SK-N-SH (cell line): ENCODE measurements at regions of chr15 and their contacts with region 1.

Region 1: GRCh38 chr15:45166834-45167630 is 20.7 kb downstream of the SHF start:
- DNase-seq: peak; percentile 83
- H3K4me3 ChIP-seq: peak overlapping the region; percentile 54 to 72
- H3K27ac ChIP-seq: peak overlapping the region; percentile 84 to 100
- H3K4me1 ChIP-seq: peaks cover 16 to 65% of the 10 kb centered on the region in 2 experiments
- H3K27me3 ChIP-seq: no peaks in the 10 kb centered on the region
- CTCF ChIP-seq: peak; percentile 62
- EP300 ChIP-seq: 0 out of 4 replicates have a peak, but pooled peaks have one; percentile 2 to 22
- RAD21 ChIP-seq: peak; percentile 17; the same call in 1 of the 2 replicates

Region 2: DNA sequence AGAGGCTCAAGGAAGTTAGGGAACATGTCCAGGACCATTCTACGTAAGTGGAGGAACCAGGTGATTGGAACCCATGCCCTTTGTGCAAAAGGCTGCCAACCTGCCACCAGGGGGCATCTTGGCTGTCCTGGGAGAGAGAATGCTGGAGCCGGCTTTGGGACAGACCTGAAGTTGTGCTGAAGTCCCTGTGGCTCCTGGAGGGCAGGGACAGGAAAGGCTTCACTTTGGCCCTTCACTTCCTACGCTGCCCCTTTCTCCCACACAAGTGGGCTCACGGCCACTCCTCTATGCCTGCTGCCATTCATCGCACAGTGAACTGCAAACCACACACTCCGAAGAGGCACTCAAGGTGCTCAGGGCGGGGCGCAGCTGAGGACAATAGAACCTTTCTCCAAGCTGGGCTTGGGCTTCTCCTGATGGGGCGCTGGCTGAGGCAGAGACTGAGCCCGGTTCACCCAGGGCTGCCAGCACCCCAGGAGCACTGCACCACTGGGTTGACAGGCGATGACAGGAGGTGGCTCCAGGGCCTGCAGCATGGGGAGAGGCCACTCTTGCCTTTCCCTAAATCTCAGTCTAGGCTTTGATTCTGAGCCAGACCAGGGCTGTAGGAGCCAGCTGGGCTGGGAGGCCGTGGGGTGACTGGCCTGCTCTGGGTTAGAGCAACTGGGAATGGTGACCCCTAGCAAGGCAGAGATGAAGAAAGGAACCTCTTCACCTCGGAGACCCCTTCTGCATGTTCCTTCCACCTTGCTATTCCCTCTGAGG is 12.4 kb after region 1 on chr15:
- CTCF ChIA-PET with region 1: interaction called, 41 read pairs
- POLR2A ChIA-PET with region 1: interaction called, 97 read pairs
- DNase-seq: peak; percentile 48
- H3K4me3 ChIP-seq: no peak overlapping the region
- H3K27ac ChIP-seq: no peak overlapping the region
- H3K4me1 ChIP-seq: peaks cover 11 to 34% of the 10 kb centered on the region in 2 experiments; a peak in 3 of 4 replicates
- H3K27me3 ChIP-seq: no peaks in the 10 kb centered on the region
- CTCF ChIP-seq: peak; percentile 56
- EP300 ChIP-seq: no peak
- RAD21 ChIP-seq: peak; percentile 22; the same call in 1 of the 2 replicates

Region 3: GRCh38 chr15:45187894-45188830 is 21.1 kb after region 1 on chr15 and contains the start of gene SHF:
- CTCF ChIA-PET with region 1: interaction called, 41 read pairs
- POLR2A ChIA-PET with region 1: interaction called, 97 read pairs
- DNase-seq: peak; percentile 93
- H3K4me3 ChIP-seq: peak within 1 kb of the TSS; percentile 74 to 78
- H3K27ac ChIP-seq: peak within 1 kb of the TSS in 1 of 2 experiments; percentile 87; a peak in 2 of 4 replicates
- H3K4me1 ChIP-seq: peaks cover 12 to 42% of the 10 kb centered on the region in 2 experiments; a peak in 3 of 4 replicates
- H3K27me3 ChIP-seq: no peaks in the 10 kb centered on the region; the same call in 1 of the 2 replicates
- CTCF ChIP-seq: no peak
- EP300 ChIP-seq: no peak
- RAD21 ChIP-seq: no peak
- polyA plus RNA-seq, gene SHF: 4.4 and 5.5 TPM in 2 replicates

Region 4: GRCh38 chr15:45198337-45199135 is 31.5 kb after region 1 on chr15:
- CTCF ChIA-PET with region 1: interaction called, 226 read pairs
- POLR2A ChIA-PET with region 1: interaction called, 31 read pairs
- DNase-seq: peak; percentile 74
- H3K4me3 ChIP-seq: peak overlapping the region; percentile 70 to 87
- H3K27ac ChIP-seq: peak overlapping the region; percentile 93 to 94
- H3K4me1 ChIP-seq: peaks cover 0 to 4% of the 10 kb centered on the region in 2 experiments; a peak in 1 of 4 replicates
- H3K27me3 ChIP-seq: no peaks in the 10 kb centered on the region
- CTCF ChIP-seq: peak; percentile 94
- EP300 ChIP-seq: peak in 1 of 2 experiments; percentile 52; a peak in 1 of 4 replicates
- RAD21 ChIP-seq: peak; percentile 28